ENCODE measurements at regions of chrX and their contacts with region 1.

Region 1: GRCh38 chrX:107025545-107025944 is 25.5 kb upstream of the MORC4 start:
- DNase-seq: no peak

Region 2: GRCh38 chrX:106626789-106627188 is 398.8 kb before region 1 on chrX:
- intact Hi-C with region 1: no loop called
- DNase-seq: no peak

Region 3: GRCh38 chrX:106906361-106906760 is 119.2 kb before region 1 on chrX:
- intact Hi-C with region 1: no loop called
- DNase-seq: no peak

Region 4: DNA sequence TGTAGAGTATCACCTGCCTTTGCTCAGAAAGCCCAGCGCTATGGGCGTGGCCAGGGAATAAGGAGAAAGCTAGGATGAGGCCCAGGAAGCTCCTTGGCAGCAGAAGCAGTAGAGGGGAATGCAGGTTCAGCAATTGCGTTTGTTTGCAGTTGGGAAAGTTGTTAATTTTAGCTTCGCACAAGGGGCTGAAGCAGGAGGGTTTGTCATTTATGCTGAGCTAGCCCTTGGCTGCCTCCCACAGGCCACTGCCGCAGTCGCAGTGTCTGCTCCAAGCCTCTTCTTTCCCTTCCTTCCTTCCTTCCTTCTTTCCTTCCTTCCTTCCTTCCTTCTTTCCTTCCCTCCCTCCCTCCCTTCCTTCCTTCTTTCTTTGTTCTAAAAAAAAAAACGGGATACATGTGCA is 445.4 kb after region 1 on chrX:
- intact Hi-C with region 1: no loop called
- DNase-seq: no peak

Region 5: DNA sequence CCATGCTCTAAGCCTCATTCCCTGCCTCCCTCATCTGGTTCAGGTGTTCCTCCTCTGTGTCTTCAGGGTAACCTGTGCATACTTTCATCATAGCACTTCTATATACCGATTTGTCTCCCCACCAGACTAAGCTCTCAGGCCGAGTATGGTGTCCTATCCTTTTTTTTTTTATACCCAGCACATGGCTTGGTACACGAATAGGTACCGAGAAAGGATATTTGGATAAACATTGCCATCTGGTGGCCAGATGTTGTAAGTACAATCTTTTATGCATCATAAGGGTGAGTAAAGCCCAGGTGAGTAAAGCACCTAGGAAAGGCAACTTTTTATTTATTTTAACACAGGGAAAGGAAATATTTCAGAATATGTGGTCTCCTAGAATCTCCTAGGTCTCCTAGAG is 868.5 kb after region 1 on chrX:
- intact Hi-C with region 1: loop called (anchors 10 kb)
- DNase-seq: no peak